ENCODE measurements at regions of chr11 and their contacts with region 1.

Region 1: DNA sequence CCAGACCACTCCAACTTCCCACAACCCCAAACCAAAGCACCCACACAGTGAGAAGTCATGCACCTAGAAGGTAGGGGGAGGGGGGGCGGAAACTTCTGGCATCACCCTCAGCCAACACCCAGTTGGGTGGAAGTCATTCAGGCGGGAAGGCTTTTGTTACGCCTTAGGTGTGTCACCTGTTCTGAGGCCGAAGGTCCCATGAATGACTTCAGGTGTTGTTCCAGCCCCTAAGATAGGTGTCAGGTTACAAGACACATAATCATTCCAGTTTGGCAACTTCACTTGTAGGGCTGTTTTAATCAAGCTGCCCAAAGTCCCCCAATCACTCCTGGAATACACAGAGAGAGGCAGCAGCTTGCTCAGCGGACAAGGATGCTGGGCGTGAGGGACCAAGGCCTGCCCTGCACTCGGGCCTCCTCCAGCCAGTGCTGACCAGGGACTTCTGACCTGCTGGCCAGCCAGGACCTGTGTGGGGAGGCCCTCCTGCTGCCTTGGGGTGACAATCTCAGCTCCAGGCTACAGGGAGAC is at the start of gene TMPRSS4:
- DNase-seq: no peak
- H3K4me3 ChIP-seq: no peak within 1 kb of the TSS
- H3K27ac ChIP-seq: no peak within 1 kb of the TSS
- H3K4me1 ChIP-seq: peaks cover 0 to 9% (median 5%) of the 10 kb centered on the region in 4 experiments
- H3K27me3 ChIP-seq: peaks cover 0 to 2% (median 0%) of the 10 kb centered on the region in 5 experiments

Region 2: GRCh38 chr11:118012083-118012669 is 64.6 kb before region 1 on chr11:
- CTCF ChIA-PET with region 1: no interaction called
- POLR2A ChIA-PET with region 1: no interaction called
- DNase-seq: peak; percentile 85 to 96 (median 93)
- H3K4me3 ChIP-seq: peak overlapping the region in 2 of 7 experiments; percentile 5 to 14
- H3K27ac ChIP-seq: peak overlapping the region in 1 of 2 experiments; percentile 9
- H3K4me1 ChIP-seq: peaks cover 21 to 98% (median 84%) of the 10 kb centered on the region in 4 experiments
- H3K27me3 ChIP-seq: no peaks in the 10 kb centered on the region

Region 3: GRCh38 chr11:118088477-118088920 is 11.7 kb after region 1 on chr11:
- CTCF ChIA-PET with region 1: interaction called, 25 read pairs
- POLR2A ChIA-PET with region 1: no interaction called
- DNase-seq: peak; percentile 54 to 96 (median 93)
- H3K4me3 ChIP-seq: no peak overlapping the region
- H3K27ac ChIP-seq: peak overlapping the region in 1 of 2 experiments; percentile 17
- H3K4me1 ChIP-seq: peaks cover 4 to 53% (median 25%) of the 10 kb centered on the region in 4 experiments
- H3K27me3 ChIP-seq: no peaks in the 10 kb centered on the region

Region 4: DNA sequence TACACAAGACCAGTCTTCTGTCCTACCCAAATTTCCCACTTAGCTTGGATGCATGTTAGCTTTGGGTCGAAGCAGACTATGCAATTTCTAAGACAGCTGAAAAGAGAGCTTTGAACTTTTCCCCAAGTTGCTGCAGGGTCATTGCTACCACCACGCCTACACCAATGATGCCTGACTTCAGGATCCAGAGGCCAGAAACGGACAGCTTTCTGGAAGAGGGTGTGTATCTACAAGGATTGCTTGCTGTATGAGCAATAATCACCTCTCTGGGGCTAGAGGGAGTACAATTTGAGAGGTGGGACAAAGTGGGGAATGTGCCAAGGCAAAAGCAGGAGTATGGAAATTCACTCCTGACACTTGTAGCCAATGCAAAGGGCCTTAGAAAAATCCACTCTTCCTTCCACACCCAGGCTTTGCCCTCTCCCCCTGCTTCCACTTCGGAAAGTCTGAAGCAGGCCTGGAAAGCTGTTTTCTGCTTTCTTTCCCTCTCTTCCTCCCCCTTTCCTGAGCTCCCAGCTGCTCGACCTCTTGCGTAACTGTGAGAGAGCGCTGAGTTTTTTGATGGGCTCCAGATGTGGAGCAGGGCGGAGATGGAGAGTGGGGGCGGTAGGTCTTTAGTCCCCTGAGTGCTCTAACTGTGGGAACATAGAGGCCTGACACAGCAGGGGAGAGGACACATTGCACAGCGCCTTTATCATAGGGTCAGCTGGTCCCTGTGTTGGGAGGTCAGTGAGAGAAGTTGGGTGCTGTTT is 528.5 kb after region 1 on chr11:
- CTCF ChIA-PET with region 1: no interaction called
- POLR2A ChIA-PET with region 1: no interaction called
- DNase-seq: no peak
- H3K4me3 ChIP-seq: no peak overlapping the region
- H3K27ac ChIP-seq: no peak overlapping the region
- H3K4me1 ChIP-seq: peaks cover 0 to 31% (median 26%) of the 10 kb centered on the region in 4 experiments
- H3K27me3 ChIP-seq: peaks cover 0 to 28% (median 9%) of the 10 kb centered on the region in 5 experiments

Measured in common myeloid progenitor, CD34-positive (primary cell).